Activated CD4-positive, alpha-beta memory T cell treated with anti-CD3 and anti-CD28 coated beads for 36 hours (primary cell): ENCODE measurements at regions of chr4 and their contacts with region 1.

Region 1: DNA sequence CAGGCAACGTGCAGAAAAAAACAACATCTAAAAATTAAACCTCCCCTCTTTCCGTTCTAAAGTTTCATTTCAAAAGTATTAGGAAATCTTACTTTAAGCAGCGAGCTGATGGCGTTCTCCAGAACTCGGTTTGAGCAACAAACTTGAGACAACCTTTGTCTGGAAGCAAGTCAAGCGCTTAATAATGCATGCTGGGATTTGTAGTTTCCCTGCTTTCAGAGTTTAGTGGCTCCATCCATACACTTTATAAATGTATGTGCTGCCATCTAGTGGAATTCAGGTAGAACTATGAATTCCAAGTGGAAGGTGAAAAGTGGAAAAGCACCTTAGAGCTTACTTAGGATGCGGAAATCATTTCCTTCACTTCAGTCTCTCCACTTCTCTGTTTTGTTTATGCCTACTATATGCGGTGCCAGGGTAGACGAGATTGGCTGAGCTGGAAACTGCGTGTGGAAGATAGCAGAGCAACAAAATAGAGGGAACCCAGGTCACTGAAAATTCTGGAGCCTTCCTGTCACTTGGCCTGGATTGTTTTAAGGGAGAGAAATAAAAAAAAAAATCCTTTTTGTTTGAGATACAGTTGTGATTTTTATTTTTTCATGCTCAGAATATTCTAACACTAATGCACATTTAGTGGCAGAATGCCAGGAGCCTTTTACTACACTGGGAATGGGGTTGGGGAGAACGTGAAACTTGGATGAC is at the start of gene BDH2:
- DNase-seq: peak; percentile 47
- H3K4me3 Mint-ChIP-seq: peak within 1 kb of the TSS; percentile 76
- H3K27ac Mint-ChIP-seq: peak within 1 kb of the TSS; percentile 78
- H3K4me1 Mint-ChIP-seq: peaks cover 17% of the 10 kb centered on the region
- H3K27me3 Mint-ChIP-seq: no peaks in the 10 kb centered on the region
- total RNA-seq, gene BDH2: 14.4 to 15.4 TPM

Region 2: GRCh38 chr4:102263011-102263787 is 836.6 kb before region 1 on chr4:
- CTCF ChIA-PET with region 1: no interaction called
- POLR2A ChIA-PET with region 1: no interaction called
- intact Hi-C with region 1: loop called (anchors 10 kb)
- DNase-seq: peak; percentile 13
- H3K4me3 Mint-ChIP-seq: no peak overlapping the region
- H3K27ac Mint-ChIP-seq: no peak overlapping the region
- H3K4me1 Mint-ChIP-seq: peaks cover 10% of the 10 kb centered on the region
- H3K27me3 Mint-ChIP-seq: no peaks in the 10 kb centered on the region

Region 3: DNA sequence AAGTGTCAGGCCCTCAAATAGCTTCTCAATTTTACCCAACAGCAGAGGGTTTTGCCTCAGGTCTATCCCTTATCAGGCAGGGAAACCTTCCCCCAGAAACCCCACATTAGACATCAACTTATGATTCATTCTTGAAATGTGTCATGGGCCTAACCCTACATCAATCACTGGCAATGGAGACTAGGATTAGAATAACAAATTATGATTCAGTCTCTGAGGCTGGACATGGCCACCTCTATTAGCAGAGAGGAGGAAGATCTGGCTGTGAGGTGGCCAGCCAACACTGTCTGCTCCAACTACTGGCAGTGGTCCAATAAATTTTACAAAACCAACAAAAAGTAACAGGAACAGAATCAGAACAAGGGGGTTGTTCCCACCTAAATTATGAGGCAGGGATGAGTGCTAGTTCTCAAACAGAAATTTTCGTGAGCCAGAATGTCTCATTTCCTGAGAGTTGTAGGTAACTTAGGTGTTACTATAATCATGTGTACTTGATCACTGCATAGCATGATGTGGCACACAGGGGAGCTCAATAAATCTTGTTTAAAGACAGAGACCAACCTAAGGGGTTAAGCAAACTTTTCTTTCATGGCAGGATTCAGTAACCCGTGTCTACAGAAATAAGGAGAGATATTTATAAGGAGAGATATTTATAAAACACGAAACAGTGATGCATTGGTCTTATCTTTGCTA is 471.9 kb before region 1 on chr4:
- CTCF ChIA-PET with region 1: interaction called, 5 read pairs
- POLR2A ChIA-PET with region 1: no interaction called
- intact Hi-C with region 1: loop called (anchors 1 kb)
- DNase-seq: peak; percentile 37
- H3K4me3 Mint-ChIP-seq: no peak overlapping the region
- H3K27ac Mint-ChIP-seq: peak overlapping the region; percentile 69
- H3K4me1 Mint-ChIP-seq: peaks cover 67% of the 10 kb centered on the region
- H3K27me3 Mint-ChIP-seq: no peaks in the 10 kb centered on the region

Region 4: DNA sequence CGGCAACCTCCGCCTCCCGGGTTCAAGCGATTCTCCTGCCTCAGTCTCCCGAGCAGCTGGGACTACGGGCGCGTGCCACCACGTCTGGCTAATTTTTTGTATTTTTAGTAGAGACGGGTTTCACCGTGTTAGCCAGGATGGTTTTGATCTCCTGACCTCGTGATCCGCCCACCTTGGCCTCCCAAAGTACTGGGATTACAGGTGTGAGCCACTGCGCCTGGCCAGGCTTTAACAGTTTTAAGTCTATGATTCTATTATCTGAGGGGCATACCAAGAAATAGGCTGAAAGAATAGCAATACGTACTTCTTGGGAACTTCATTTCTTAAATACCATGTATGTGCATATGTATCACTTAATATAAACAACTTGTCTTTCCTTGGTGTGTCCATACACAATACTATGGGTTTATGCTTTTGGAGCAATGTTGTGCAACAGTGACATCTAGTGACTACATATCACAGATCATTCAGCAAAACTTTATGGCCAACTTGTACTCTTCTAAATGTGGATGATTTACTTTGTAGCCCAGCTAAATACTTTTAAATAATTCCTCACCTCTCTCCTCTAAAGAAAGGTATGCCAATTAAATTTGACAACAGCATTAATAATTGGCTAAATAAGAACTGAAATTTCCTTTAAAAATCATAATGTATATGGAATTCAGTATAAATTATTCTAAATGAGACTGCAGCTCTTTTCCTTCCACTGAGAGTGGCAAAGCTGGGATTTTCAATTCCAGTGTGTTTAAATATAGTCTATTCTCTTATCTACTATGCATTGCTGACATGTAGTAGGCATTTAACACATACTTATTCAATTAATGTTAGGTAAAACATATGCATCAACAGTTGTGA is 90.7 kb before region 1 on chr4:
- CTCF ChIA-PET with region 1: interaction called, 6 read pairs
- POLR2A ChIA-PET with region 1: no interaction called
- intact Hi-C with region 1: loop called (anchors 1 kb)
- DNase-seq: no peak
- H3K4me3 Mint-ChIP-seq: no peak overlapping the region
- H3K27ac Mint-ChIP-seq: no peak overlapping the region
- H3K4me1 Mint-ChIP-seq: no peaks in the 10 kb centered on the region
- H3K27me3 Mint-ChIP-seq: no peaks in the 10 kb centered on the region

Region 5: DNA sequence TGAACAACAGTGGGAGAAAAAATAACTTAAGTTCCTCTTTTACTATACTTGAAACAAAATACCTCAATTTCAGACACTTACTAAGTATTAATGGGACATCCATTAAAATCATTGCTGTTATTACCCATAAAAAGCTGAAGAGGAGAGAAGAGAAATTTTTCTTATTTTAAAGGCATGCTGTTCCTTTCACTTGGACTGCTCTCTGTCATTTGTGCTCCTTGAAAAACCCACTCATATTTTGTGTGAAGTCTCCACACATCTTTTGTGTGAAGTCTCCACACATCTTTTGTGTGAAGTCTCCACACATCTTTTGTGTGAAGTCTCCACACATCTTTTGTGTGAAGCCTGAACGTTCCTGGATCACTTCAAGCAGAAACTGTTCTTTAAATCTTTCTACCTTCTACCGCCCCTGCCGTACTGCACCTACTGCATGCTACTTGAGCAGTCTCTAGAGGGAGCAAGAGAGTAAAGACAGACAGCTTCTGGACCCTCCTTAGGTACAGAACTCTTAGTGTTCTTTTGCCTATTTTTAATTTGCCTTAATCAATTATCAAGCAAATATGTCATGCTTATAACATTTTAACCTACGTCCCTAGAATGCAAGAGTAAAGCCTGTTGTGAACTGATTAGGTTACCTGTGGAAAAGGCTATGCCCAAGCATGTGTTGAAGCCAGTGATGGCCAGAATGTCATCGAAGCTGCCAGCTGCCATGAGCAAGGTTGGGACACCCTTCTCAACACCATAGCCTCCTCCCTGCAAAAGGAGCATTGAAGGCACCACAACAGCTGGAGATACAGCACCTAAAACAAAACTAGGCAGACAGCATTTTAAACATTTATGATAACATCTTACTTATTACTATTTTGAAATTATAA is 53.2 kb before region 1 on chr4:
- CTCF ChIA-PET with region 1: interaction called, 65 read pairs
- POLR2A ChIA-PET with region 1: no interaction called
- intact Hi-C with region 1: loop called (anchors 2 kb)
- DNase-seq: peak; percentile 40
- H3K4me3 Mint-ChIP-seq: no peak overlapping the region
- H3K27ac Mint-ChIP-seq: no peak overlapping the region
- H3K4me1 Mint-ChIP-seq: peaks cover 10% of the 10 kb centered on the region
- H3K27me3 Mint-ChIP-seq: no peaks in the 10 kb centered on the region